PC-3 (cell line): ENCODE measurements at regions of chr15 and their contacts with region 1.

Region 1: GRCh38 chr15:89358755-89359439 is 24.3 kb upstream of the POLG start:
- DNase-seq: peak; percentile 83
- ATAC-seq: peak; percentile 86
- H3K4me3 ChIP-seq: peak overlapping the region; percentile 73
- H3K27ac ChIP-seq: no peak overlapping the region
- H3K4me1 ChIP-seq: 0 out of 2 replicates have a peak, but pooled peaks cover 3% of the 10 kb centered on the region
- H3K27me3 ChIP-seq: peaks cover 49% of the 10 kb centered on the region
- CTCF ChIP-seq: peak; percentile 92

Region 2: GRCh38 chr15:89334510-89335288 is 24.2 kb before region 1 on chr15 and contains the start of gene POLG:
- CTCF ChIA-PET with region 1: no interaction called
- POLR2A ChIA-PET with region 1: no interaction called
- intact Hi-C with region 1: loop called (anchors 1 kb)
- DNase-seq: peak; percentile 98
- ATAC-seq: peak; percentile 92
- H3K4me3 ChIP-seq: peak within 1 kb of the TSS; percentile 80
- H3K27ac ChIP-seq: peak within 1 kb of the TSS; percentile 56
- H3K4me1 ChIP-seq: peaks cover 29% of the 10 kb centered on the region
- H3K27me3 ChIP-seq: no peaks in the 10 kb centered on the region
- CTCF ChIP-seq: no peak
- total RNA-seq, gene POLG: 72.4 and 83.5 TPM in 2 replicates

Region 3: GRCh38 chr15:89416141-89416853 is 57.4 kb after region 1 on chr15:
- CTCF ChIA-PET with region 1: no interaction called
- POLR2A ChIA-PET with region 1: no interaction called
- intact Hi-C with region 1: loop called (anchors 5 kb)
- DNase-seq: peak; percentile 77
- ATAC-seq: peak; percentile 86
- H3K4me3 ChIP-seq: no peak overlapping the region
- H3K27ac ChIP-seq: no peak overlapping the region
- H3K4me1 ChIP-seq: no peaks in the 10 kb centered on the region; the same call in 1 of the 2 replicates
- H3K27me3 ChIP-seq: peaks cover 19% of the 10 kb centered on the region
- CTCF ChIP-seq: peak; percentile 96

Region 4: DNA sequence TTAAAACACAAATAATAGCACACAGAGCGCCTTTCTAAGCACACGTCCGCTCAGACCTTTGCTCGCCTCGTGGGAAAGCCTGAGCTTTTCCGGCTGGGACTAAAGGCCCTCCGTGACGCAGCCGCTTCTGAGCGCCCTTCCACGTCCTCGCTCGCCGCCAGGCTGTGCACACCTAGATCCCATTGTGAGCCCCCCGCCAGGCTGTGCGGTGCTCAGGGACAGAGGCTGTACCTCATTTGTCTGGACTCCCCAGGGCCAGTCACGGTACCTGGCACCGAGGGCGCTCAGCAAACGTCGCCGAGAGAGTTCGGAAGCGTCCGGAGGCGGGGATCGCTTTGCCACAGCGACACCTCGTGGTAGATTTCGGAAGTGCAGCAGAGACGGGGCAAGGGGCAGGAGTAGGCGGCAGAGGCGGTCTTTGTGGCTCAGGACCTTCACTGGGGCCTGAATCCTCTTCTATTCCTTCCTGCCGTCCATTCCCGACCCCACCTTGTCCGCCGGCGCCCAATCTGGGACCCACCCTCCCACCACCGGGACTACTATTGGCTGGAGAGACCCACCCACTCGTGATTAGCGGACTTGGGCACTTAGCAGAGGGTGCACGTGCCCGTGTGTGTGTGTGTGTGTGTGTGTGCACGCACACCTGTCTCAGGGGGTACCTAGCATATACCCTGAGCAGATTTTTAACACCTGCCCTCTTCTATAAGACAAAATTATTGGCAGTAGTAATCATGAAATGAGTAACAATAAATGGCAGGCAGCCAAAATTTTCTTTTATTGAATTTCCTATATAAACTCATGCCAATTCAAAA is 71.8 kb after region 1 on chr15:
- CTCF ChIA-PET with region 1: interaction called, 13 read pairs
- POLR2A ChIA-PET with region 1: no interaction called
- intact Hi-C with region 1: loop called (anchors 1 kb)
- DNase-seq: peak; percentile 88
- ATAC-seq: peak; percentile 95
- H3K4me3 ChIP-seq: peak overlapping the region; percentile 81
- H3K27ac ChIP-seq: no peak overlapping the region
- H3K4me1 ChIP-seq: peaks cover 13% of the 10 kb centered on the region
- H3K27me3 ChIP-seq: no peaks in the 10 kb centered on the region
- CTCF ChIP-seq: peak; percentile 92

Region 5: GRCh38 chr15:89448825-89449224 is 89.9 kb after region 1 on chr15:
- CTCF ChIA-PET with region 1: no interaction called
- POLR2A ChIA-PET with region 1: no interaction called
- intact Hi-C with region 1: no loop called
- DNase-seq: no peak
- ATAC-seq: no peak
- H3K4me3 ChIP-seq: no peak overlapping the region
- H3K27ac ChIP-seq: no peak overlapping the region
- H3K4me1 ChIP-seq: peaks cover 32% of the 10 kb centered on the region
- H3K27me3 ChIP-seq: no peaks in the 10 kb centered on the region
- CTCF ChIP-seq: no peak

Region 6: GRCh38 chr15:89472785-89473256 is 113.9 kb after region 1 on chr15:
- CTCF ChIA-PET with region 1: interaction called, 3 read pairs
- POLR2A ChIA-PET with region 1: no interaction called
- intact Hi-C with region 1: loop called (anchors 2 kb)
- DNase-seq: peak; percentile 75
- ATAC-seq: peak; percentile 82
- H3K4me3 ChIP-seq: no peak overlapping the region
- H3K27ac ChIP-seq: no peak overlapping the region
- H3K4me1 ChIP-seq: peaks cover 12% of the 10 kb centered on the region
- H3K27me3 ChIP-seq: no peaks in the 10 kb centered on the region
- CTCF ChIP-seq: peak; percentile 93

Region 7: GRCh38 chr15:89556413-89557262 is 197.7 kb after region 1 on chr15:
- CTCF ChIA-PET with region 1: no interaction called
- POLR2A ChIA-PET with region 1: no interaction called
- intact Hi-C with region 1: loop called (anchors 10 kb)
- DNase-seq: peak; percentile 91
- ATAC-seq: peak; percentile 80
- H3K4me3 ChIP-seq: no peak overlapping the region
- H3K27ac ChIP-seq: no peak overlapping the region
- H3K4me1 ChIP-seq: no peaks in the 10 kb centered on the region
- H3K27me3 ChIP-seq: no peaks in the 10 kb centered on the region
- CTCF ChIP-seq: peak; percentile 87